Ascending aorta (tissue), 2 donors: ENCODE measurements at regions of chr6 and their contacts with region 1.

Region 1: DNA sequence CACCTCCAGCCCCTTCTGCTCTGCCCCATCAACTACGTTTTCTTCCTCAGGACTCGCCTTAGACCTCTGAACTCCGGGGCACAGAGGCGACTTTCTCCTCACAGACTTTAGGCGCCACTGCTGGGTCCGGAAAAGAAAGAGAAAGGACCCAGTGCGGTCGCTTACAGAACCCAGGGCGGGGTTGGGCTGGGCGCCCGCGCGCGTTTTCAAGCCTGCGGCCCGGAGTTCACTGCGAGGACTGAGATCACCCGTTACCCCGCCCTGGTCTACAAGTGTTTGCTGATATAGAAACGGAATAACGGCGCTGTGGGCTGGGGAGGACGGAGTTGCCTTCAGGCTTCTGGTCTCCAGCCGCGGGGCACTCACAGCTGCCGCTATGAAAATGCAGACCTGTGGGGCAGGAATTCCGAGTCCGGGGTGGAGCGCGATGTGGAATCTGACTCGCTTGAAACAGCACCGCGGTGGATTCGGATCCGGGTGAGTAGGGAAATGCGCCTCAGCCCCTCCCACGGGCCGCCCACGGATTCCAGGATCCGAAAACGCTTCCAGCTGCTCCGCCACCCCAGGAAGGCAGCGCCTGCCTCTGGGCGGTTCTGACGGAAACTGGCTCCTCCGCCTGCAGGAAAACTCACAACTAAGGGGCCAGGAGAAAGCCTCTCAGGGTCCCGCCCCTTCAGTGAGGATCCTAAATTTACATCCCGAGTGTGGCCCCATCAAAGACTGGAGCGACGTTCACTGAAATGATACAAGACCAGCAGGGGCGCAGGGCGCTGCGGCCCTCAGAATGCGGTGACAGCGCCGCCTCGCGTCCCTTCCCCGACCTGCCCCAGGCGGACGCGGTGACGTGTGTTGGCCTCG is 29.4 kb downstream of the HLA-F start:
- DNase-seq: peak; percentile 74 to 96
- H3K4me3 ChIP-seq: peak overlapping the region; percentile 72 to 76
- H3K27ac ChIP-seq: peak overlapping the region; percentile 94 to 96
- H3K4me1 ChIP-seq: peaks cover 8 to 10% of the 10 kb centered on the region in 2 donors
- H3K27me3 ChIP-seq: no peaks in the 10 kb centered on the region
- CTCF ChIP-seq: peak; percentile 94 to 96 (median 96)

Region 2: GRCh38 chr6:29632789-29633533 is 119.7 kb before region 1 on chr6 and contains the start of gene GABBR1:
- intact Hi-C with region 1: loop called (anchors 1 kb)
- DNase-seq: peak; percentile 42 to 94
- H3K4me3 ChIP-seq: peak within 1 kb of the TSS; percentile 77 to 81
- H3K27ac ChIP-seq: peak within 1 kb of the TSS; percentile 79 to 81
- H3K4me1 ChIP-seq: peaks cover 8 to 17% of the 10 kb centered on the region in 2 donors
- H3K27me3 ChIP-seq: no peaks in the 10 kb centered on the region
- CTCF ChIP-seq: no peak
- total RNA-seq, gene GABBR1: 166 TPM

Region 3: GRCh38 chr6:29705389-29706231 is 47.1 kb before region 1 on chr6:
- intact Hi-C with region 1: loop called (anchors 2 kb)
- DNase-seq: no peak
- H3K4me3 ChIP-seq: no peak overlapping the region
- H3K27ac ChIP-seq: no peak overlapping the region
- H3K4me1 ChIP-seq: no peaks in the 10 kb centered on the region
- H3K27me3 ChIP-seq: no peaks in the 10 kb centered on the region
- CTCF ChIP-seq: peak; percentile 54 to 62 (median 60)

Region 4: DNA sequence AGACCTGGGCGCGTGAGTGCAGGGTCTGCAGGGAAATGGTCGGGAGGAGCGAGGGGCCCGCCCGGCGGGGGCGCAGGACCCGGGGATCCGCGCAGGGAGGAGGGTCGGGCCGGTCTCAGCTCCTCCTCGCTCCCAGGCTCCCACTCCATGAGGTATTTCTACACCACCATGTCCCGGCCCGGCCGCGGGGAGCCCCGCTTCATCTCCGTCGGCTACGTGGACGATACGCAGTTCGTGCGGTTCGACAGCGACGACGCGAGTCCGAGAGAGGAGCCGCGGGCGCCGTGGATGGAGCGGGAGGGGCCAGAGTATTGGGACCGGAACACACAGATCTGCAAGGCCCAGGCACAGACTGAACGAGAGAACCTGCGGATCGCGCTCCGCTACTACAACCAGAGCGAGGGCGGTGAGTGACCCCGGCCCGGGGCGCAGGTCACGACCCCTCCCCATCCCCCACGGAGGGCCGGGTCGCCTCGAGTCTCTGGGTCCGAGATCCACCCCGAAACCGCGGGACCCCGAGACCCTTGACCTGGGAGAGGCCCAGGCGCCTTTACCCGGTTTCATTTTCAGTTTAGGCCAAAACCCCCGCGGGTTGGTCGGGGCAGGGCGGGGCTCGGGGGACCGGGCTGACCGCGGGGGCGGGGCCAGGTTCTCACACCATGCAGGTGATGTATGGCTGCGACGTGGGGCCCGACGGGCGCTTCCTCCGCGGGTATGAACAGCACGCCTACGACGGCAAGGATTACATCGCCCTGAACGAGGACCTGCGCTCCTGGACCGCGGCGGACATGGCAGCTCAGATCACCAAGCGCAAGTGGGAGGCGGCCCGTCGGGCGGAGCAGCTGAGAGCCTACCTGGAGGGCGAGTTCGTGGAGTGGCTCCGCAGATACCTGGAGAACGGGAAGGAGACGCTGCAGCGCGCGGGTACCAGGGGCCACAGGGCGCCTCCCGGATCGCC is 135.4 kb after region 1 on chr6:
- intact Hi-C with region 1: loop called (anchors 5 kb)
- DNase-seq: peak in 1 of 2 donors; percentile 92
- H3K4me3 ChIP-seq: peak overlapping the region in 1 of 2 donors; percentile 82
- H3K27ac ChIP-seq: peak overlapping the region in 1 of 2 donors; percentile 97
- H3K4me1 ChIP-seq: peaks cover 0 to 5% of the 10 kb centered on the region in 2 donors
- H3K27me3 ChIP-seq: no peaks in the 10 kb centered on the region
- CTCF ChIP-seq: no peak

Region 5: GRCh38 chr6:30184417-30185031 is 431.8 kb after region 1 on chr6:
- intact Hi-C with region 1: no loop called
- DNase-seq: no peak
- H3K4me3 ChIP-seq: no peak overlapping the region
- H3K27ac ChIP-seq: no peak overlapping the region
- H3K4me1 ChIP-seq: no peaks in the 10 kb centered on the region
- H3K27me3 ChIP-seq: no peaks in the 10 kb centered on the region
- CTCF ChIP-seq: no peak

Region 6: DNA sequence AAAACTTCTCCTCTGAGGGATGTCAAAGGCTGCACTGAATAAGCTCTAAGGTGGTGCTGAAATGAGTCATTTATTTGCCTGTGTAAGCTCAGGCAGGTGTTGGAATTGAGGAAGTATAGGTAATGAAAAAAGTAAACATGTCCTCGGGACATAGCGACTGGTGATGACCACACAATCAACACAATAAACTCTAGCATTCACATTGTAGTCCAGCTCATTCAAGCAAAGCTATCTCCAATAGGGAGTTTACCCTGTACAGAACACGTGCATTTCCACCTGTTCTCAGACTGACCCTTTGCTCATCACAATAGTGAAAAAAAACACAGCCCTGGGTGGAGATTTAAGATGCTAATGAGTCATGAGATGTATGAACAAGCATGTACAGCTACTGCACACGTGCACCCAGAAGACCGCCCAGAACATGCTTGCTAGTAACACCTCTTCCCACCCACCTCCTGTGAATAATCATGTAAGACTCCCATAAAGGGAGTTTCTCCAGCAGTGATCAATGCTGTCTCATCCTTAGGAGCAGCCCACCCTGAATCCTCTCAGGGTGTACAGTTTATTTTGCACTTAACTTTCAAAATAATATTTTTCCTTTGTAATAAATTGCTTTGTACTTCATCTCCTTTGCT is 1450.8 kb after region 1 on chr6:
- intact Hi-C with region 1: loop called (anchors 10 kb)
- DNase-seq: peak in 1 of 2 donors; percentile 63
- H3K4me3 ChIP-seq: peak overlapping the region; percentile 43 to 56
- H3K27ac ChIP-seq: peak overlapping the region; percentile 61 to 72
- H3K4me1 ChIP-seq: peaks cover 5 to 18% of the 10 kb centered on the region in 2 donors
- H3K27me3 ChIP-seq: no peaks in the 10 kb centered on the region
- CTCF ChIP-seq: no peak